Transverse colon (tissue), 4 donors: ENCODE measurements at regions of chr20 and their contacts with region 1.

Region 1: DNA sequence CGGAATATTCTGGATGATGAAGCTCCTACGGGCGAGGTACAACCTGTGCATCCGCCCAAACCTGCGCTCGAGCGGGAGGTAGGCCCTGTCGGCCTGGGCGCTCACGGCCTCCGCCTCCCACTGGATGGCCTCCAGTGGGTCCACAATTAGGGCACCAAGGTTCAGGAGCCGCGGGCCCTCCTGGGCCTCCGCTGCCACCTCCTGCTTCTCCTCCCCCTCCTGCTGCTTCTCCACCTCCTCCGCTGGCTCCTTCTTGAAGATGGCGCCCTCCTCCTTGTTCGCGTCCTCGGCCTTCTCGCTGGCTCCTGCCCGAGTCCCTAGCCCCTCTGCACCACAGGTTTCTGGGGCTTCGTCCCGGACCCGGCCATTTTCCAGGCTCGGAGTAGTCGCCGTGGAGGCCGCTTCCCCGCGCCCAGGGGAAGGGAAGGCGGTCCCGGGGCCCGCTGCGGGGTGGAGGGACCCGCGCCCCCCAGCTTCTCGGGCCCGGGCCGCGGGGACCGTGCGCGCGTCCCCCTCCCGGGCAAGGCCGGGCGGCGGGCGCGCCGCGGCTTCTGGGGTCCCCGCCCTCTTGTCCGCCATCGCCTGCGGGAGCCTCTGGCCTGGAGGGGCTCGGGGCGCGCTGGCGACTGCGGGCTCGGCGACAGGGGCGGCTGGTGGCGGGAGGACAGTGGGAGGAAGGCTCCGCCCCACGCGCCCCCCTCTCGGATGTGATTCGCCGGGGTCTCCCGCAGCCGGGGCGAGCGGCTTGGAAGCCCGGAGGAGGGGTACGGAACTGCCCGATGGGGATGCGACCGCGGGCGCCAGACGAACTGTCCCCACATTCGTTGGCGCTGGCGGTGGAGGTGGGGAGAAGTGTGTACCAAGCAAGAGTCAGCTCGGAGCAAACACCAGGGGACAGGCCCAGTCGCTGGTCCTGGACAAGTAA is 17.6 kb downstream of the PLAGL2 start:
- DNase-seq: peak; percentile 37
- H3K4me3 ChIP-seq: peak overlapping the region; percentile 42 to 78 (median 61)
- H3K27ac ChIP-seq: peak overlapping the region; percentile 74 to 82 (median 78)
- H3K4me1 ChIP-seq: peaks cover 10 to 13% (median 12%) of the 10 kb centered on the region in 4 donors
- H3K27me3 ChIP-seq: no peaks in the 10 kb centered on the region
- CTCF ChIP-seq: no peak
- EP300 ChIP-seq: no peak
- POLR2A ChIP-seq: no peak

Region 2: DNA sequence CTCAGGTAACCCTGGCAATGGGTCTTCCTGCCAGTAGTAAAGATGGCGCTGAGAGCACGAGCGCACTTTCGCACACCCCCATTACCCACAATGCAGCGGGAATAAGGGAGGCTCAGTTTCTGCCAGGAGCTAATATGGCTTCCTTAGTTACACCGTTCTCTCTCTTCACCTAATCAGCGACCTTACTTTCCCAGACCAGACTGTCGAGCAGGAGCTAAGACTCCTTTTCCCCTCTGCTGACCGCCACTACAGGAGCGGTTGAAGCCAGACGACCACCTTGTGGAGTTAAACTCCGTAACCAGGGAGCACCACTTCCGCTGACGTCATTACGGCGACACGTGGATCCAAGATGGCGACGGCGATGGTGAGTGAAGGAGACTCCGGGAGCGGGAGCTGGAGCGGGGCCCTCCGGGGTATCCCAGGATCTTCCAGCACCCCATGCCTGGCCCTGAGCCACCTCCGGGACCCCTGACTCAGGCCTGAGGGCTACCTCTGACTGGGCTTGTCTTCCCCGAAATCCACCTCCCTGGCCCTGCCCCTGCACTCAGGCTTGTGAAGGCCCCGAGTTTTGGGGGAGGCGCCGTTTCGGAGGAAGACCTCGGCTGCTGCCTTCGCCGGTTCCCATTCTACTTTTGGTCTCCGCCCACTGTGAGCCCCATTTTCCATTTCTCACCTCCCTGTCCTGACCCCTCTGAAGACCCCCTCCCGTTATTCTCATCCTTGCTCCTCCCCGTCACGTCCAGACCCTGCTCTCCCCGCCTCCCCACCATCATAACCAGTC is 80.4 kb before region 1 on chr20 and contains the start of gene TM9SF4:
- in situ Hi-C with region 1: no loop called
- intact Hi-C with region 1: no loop called
- DNase-seq: peak; percentile 90
- H3K4me3 ChIP-seq: peak within 1 kb of the TSS; percentile 77 to 99 (median 90)
- H3K27ac ChIP-seq: peak within 1 kb of the TSS; percentile 92 to 99 (median 96)
- H3K4me1 ChIP-seq: peaks cover 5 to 44% (median 36%) of the 10 kb centered on the region in 4 donors
- H3K27me3 ChIP-seq: peaks cover 8% of the 10 kb centered on the region
- CTCF ChIP-seq: no peak
- EP300 ChIP-seq: no peak
- POLR2A ChIP-seq: peak; percentile 72
- total RNA-seq, gene TM9SF4: 35.5 to 44.8 (median 42.6) TPM

Region 3: GRCh38 chr20:32484958-32485769 is 295.2 kb after region 1 on chr20:
- in situ Hi-C with region 1: no loop called
- intact Hi-C with region 1: loop called (anchors 10 kb)
- DNase-seq: peak; percentile 87
- H3K4me3 ChIP-seq: peak overlapping the region in 3 of 4 donors; percentile 89 to 97 (median 93)
- H3K27ac ChIP-seq: peak overlapping the region; percentile 93 to 97 (median 96)
- H3K4me1 ChIP-seq: peaks cover 17 to 36% (median 28%) of the 10 kb centered on the region in 4 donors
- H3K27me3 ChIP-seq: no peaks in the 10 kb centered on the region
- CTCF ChIP-seq: peak; percentile 75 to 94 (median 87)
- EP300 ChIP-seq: no peak
- POLR2A ChIP-seq: no peak

Region 4: GRCh38 chr20:33202451-33202850 is 1012.5 kb after region 1 on chr20:
- in situ Hi-C with region 1: no loop called
- intact Hi-C with region 1: no loop called
- DNase-seq: no peak
- H3K4me3 ChIP-seq: no peak overlapping the region
- H3K27ac ChIP-seq: no peak overlapping the region
- H3K4me1 ChIP-seq: no peaks in the 10 kb centered on the region
- H3K27me3 ChIP-seq: no peaks in the 10 kb centered on the region
- CTCF ChIP-seq: no peak
- EP300 ChIP-seq: no peak
- POLR2A ChIP-seq: no peak